ENCODE measurements at regions of chr11 and their contacts with region 1.

Region 1: DNA sequence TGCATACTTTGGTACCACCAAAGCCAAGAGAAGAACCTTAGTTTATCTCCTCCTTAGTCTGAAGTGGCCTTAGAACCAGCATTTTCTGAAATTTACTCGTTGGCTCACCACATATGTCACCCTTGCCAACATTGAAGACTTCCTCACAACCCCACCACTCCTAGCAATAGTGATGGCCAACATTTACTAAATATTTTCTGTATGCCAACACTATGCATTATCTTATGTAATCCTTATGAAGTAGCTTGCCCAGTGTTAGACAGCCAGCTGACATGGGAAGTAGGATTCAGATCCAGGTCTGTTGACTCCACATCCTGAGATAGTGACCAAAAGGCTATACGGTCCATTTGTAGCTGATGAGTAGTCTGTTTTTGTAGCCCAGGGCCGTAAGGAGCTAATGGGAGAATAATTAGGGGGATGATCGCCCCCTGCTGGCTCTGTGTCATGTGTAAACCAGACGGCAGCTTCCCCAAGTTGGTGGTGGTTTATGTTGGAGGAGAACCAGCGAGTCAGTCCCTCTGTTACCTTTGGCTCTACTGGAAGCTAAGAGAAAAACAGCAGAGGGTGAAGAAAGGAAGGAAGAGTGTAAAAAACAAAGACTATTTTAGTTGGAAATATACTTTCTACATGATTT is 120.5 kb upstream of the RASSF10 start:
- DNase-seq: peak; percentile 14 to 70 (median 63)
- ATAC-seq: no peak
- H3K4me3 ChIP-seq: no peak overlapping the region
- H3K4me3 Mint-ChIP-seq: no peak overlapping the region
- H3K27ac ChIP-seq: no peak overlapping the region
- H3K27ac Mint-ChIP-seq: no peak overlapping the region
- H3K4me1 ChIP-seq: no peaks in the 10 kb centered on the region
- H3K4me1 Mint-ChIP-seq: no peaks in the 10 kb centered on the region
- H3K27me3 ChIP-seq: no peaks in the 10 kb centered on the region
- H3K27me3 Mint-ChIP-seq: peaks cover 16% of the 10 kb centered on the region
- CTCF ChIP-seq: peak; percentile 68

Region 2: DNA sequence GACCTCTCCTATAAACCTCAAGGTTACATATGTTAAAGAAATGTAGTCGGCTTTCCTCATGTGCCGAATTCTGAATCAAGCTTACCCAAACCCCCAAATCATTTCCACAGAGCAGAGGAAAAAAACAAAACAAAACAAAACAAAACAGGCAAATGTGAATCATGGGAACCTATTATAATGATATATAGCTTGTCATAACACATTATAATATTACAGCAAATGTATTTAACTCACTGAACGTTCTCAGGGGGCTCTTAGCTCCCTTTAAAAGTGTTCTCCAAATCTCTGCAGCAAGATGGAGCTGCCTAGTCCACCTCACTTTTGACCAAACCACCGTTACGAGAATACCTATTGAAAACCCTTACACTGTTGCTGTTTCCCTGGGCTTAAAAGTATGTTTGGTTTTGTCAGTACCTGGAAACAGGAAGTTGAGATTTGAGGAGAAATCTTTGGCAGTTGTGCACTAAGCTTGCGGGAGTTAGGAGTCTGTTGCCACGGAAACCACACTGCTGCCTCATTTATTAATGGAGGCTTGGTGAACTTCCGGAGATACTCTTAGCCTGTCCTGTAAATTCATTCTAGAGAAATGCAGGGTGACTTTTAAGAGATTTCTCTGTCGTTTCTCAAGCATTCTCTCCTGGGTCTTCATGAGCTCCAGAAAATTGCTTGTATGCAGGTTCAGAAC is 46.6 kb before region 1 on chr11:
- CTCF ChIA-PET with region 1: no interaction called
- POLR2A ChIA-PET with region 1: no interaction called
- intact Hi-C with region 1: no loop called
- DNase-seq: no peak
- ATAC-seq: no peak
- H3K4me3 ChIP-seq: no peak overlapping the region
- H3K4me3 Mint-ChIP-seq: no peak overlapping the region
- H3K27ac ChIP-seq: no peak overlapping the region
- H3K27ac Mint-ChIP-seq: no peak overlapping the region
- H3K4me1 ChIP-seq: no peaks in the 10 kb centered on the region
- H3K4me1 Mint-ChIP-seq: peaks cover 3% of the 10 kb centered on the region
- H3K27me3 ChIP-seq: no peaks in the 10 kb centered on the region
- H3K27me3 Mint-ChIP-seq: peaks cover 13% of the 10 kb centered on the region
- CTCF ChIP-seq: no peak

Region 3: DNA sequence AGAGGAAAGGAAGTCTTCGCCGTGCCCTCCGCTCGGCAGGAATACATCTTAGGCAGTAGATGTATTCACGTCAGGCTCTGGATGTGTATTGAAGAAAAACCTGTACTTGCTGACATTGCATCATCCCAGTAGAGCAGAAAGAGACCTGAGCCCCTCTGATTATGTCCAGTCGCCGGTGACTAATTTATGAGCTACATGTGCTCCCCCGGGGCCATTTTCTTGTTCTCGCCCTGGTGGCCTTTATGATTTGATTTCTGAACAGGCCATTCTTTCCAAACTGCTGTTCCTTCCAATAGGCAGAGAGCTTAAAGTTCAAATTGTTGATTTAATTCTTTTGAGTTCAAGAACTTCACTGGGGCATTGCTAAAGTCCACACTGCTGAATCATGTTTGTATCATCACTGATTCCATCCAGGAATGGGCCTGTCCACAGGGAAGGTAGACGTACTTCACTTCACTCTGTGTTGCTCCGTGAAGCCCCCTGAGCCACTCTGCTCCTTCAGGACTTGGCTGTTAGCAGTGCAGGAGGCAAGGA is 16.8 kb before region 1 on chr11:
- CTCF ChIA-PET with region 1: interaction called, 11 read pairs
- POLR2A ChIA-PET with region 1: interaction called, 3 read pairs
- intact Hi-C with region 1: no loop called
- DNase-seq: no peak
- ATAC-seq: no peak
- H3K4me3 ChIP-seq: no peak overlapping the region
- H3K4me3 Mint-ChIP-seq: no peak overlapping the region
- H3K27ac ChIP-seq: no peak overlapping the region
- H3K27ac Mint-ChIP-seq: no peak overlapping the region
- H3K4me1 ChIP-seq: no peaks in the 10 kb centered on the region
- H3K4me1 Mint-ChIP-seq: no peaks in the 10 kb centered on the region
- H3K27me3 ChIP-seq: no peaks in the 10 kb centered on the region
- H3K27me3 Mint-ChIP-seq: peaks cover 26% of the 10 kb centered on the region
- CTCF ChIP-seq: no peak

Region 4: DNA sequence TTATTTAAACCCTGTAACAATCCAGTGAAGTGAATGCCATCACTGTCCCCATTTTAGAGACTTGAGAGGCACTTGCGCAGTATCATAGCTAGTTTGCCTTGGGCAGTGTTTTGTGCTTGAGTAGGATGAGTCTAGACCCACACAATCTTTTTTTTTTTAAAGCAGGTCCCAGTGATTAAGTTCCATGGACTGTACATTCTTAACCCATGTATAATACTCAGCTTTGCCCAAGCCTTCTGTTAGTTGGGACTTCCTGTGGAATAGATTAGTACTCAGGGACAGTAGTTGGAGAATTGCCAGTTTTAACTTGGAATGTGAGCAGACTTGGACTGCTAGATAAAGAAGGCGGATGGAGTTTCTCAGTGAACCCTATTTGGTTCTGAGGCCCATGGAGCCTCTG is 11.9 kb after region 1 on chr11:
- CTCF ChIA-PET with region 1: interaction called, 20 read pairs
- POLR2A ChIA-PET with region 1: no interaction called
- intact Hi-C with region 1: no loop called
- DNase-seq: no peak
- ATAC-seq: no peak
- H3K4me3 ChIP-seq: no peak overlapping the region
- H3K4me3 Mint-ChIP-seq: no peak overlapping the region
- H3K27ac ChIP-seq: no peak overlapping the region
- H3K27ac Mint-ChIP-seq: no peak overlapping the region
- H3K4me1 ChIP-seq: no peaks in the 10 kb centered on the region
- H3K4me1 Mint-ChIP-seq: no peaks in the 10 kb centered on the region
- H3K27me3 ChIP-seq: no peaks in the 10 kb centered on the region
- H3K27me3 Mint-ChIP-seq: peaks cover 19% of the 10 kb centered on the region
- CTCF ChIP-seq: no peak

Measured in CD8-positive, alpha-beta T cell (primary cell).